GM10248 (cell line): ENCODE measurements at regions of chr2 and their contacts with region 1.

Region 1: GRCh38 chr2:158998551-158999248 is 30.3 kb downstream of the TANC1 start:
- DNase-seq: no peak
- CTCF ChIP-seq: no peak

Region 2: GRCh38 chr2:158984604-158985135 is 14.0 kb before region 1 on chr2:
- CTCF ChIA-PET with region 1: interaction called, 31 read pairs
- POLR2A ChIA-PET with region 1: no interaction called
- DNase-seq: no peak
- CTCF ChIP-seq: no peak

Region 3: DNA sequence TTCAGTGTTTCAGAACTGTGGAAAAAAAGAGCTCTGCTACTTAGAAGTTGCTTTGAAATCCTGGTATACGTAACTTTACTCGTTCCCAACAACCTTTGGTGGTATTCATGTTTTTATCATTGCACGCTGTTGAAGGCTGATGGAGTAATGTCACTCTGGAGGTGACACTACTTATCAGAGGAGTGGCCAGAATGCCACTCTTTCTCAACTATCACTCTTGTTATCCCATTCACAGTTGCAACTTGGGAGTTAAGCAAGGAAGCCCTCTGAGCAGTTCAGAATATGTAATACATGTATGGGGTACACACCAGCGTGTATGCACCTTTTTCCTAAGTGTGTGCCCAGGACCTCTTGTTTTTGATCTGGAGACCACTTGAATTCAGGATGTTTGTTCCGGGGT is 23.3 kb after region 1 on chr2:
- CTCF ChIA-PET with region 1: no interaction called
- POLR2A ChIA-PET with region 1: no interaction called
- DNase-seq: no peak
- CTCF ChIP-seq: no peak

Region 4: DNA sequence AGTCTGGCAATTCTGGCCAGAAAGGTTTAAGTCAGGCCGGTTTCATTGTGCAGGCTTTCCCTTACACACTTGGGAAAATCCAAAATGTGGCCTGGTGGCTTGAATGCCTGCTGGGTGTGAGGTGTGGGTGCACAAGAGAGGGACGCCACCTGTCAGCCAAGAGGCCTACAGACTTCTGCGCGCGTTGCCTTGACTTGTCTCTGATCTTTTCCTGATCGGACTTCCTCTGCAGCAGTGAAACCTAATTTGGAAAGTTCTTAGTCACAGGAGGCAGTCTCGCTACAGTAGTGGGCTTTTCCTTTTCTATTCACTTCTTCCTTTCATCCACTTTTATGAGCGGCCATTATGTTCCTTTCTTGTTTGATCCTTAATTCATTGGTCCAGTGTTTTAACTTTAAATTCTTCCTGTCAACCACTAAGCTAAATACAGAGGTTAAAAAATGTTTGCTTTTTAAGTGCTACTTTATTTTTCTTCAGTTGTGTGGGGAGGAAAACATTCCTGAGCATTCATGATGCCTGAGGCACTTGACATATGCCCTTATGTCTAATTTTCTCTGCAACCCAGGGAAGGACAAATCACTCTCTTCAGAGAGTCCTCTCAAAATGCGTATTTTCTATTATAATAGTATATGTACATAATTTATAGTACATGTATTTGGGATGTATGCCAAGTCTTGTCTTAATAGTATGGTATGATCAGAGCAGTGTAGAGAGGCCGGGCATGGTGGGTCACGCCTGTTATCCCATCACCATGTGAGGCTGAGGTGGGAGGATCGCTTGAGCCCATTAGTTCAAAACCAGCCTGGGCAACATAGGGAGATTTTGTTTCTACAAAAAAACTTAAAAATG is 158.9 kb after region 1 on chr2:
- CTCF ChIA-PET with region 1: no interaction called
- POLR2A ChIA-PET with region 1: no interaction called
- DNase-seq: no peak
- CTCF ChIP-seq: no peak